Caco-2 (cell line): ENCODE measurements at regions of chr11 and their contacts with region 1.

Region 1: DNA sequence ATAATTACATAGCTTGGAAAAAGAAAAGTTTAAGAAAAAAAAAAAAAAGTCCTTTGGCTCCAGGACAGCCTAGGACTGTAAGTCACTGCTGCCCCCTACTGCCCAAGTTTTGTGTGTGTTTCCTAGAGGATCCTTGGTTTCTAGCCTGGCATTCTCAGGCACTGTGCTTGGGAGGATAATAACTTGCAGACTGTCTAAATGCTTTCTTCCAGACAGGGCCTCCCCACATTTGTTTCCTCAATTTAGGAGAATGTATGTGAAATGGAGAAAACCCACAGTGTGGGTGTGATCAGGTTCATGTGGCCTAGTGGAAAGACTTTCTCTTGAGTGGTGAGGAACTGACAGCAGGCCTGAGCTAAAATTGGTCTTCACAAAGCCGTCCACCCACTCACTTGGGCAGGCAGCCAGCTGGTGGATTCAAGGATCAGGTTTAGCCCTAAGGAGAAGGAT is 191.0 kb downstream of the NAV2 start:
- DNase-seq: peak; percentile 78 to 86
- H3K4me3 ChIP-seq: no peak overlapping the region
- H3K4me3 Mint-ChIP-seq: no peak overlapping the region
- H3K27ac Mint-ChIP-seq: no peak overlapping the region
- H3K4me1 ChIP-seq: peaks cover 13% of the 10 kb centered on the region; the same call in 1 of the 2 replicates
- H3K4me1 Mint-ChIP-seq: peaks cover 10% of the 10 kb centered on the region
- H3K27me3 ChIP-seq: no peaks in the 10 kb centered on the region
- H3K27me3 Mint-ChIP-seq: no peaks in the 10 kb centered on the region
- CTCF ChIP-seq: peak; percentile 86 to 91

Region 2: DNA sequence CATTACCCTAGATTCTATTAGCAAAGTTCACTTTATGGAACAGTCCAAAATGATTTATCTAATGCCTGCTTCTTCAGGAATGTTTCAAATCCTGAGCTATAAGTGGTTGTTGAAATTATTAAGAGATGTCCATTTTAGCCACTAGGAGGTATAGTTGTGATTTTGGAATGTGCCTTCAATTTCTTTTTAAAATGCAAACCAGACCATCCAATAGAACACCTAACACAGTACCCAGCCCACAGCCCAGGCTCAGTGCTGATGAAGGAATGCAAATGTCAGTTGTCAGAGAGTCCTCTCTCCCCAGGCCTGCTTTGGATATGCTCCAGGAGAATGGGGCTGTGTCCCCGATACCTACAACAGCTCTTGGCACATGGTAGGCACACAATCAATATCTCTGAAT is 577.1 kb before region 1 on chr11:
- CTCF ChIA-PET with region 1: interaction called, 4 read pairs
- POLR2A ChIA-PET with region 1: no interaction called
- intact Hi-C with region 1: loop called (anchors 5 kb)
- DNase-seq: no peak
- H3K4me3 ChIP-seq: no peak overlapping the region
- H3K4me3 Mint-ChIP-seq: no peak overlapping the region
- H3K27ac Mint-ChIP-seq: no peak overlapping the region
- H3K4me1 ChIP-seq: no peaks in the 10 kb centered on the region
- H3K4me1 Mint-ChIP-seq: no peaks in the 10 kb centered on the region
- H3K27me3 ChIP-seq: no peaks in the 10 kb centered on the region
- H3K27me3 Mint-ChIP-seq: peaks cover 5% of the 10 kb centered on the region
- CTCF ChIP-seq: peak in 1 of 2 experiments; percentile 24

Region 3: GRCh38 chr11:19561011-19561410 is 342.6 kb before region 1 on chr11:
- CTCF ChIA-PET with region 1: interaction called, 18 read pairs
- POLR2A ChIA-PET with region 1: interaction called, 3 read pairs
- intact Hi-C with region 1: loop called (anchors 1 kb)
- DNase-seq: no peak
- H3K4me3 ChIP-seq: no peak overlapping the region
- H3K4me3 Mint-ChIP-seq: no peak overlapping the region
- H3K27ac Mint-ChIP-seq: no peak overlapping the region
- H3K4me1 ChIP-seq: peaks cover 2% of the 10 kb centered on the region; the same call in 1 of the 2 replicates
- H3K4me1 Mint-ChIP-seq: peaks cover 2% of the 10 kb centered on the region
- H3K27me3 ChIP-seq: no peaks in the 10 kb centered on the region
- H3K27me3 Mint-ChIP-seq: no peaks in the 10 kb centered on the region
- CTCF ChIP-seq: no peak

Region 4: DNA sequence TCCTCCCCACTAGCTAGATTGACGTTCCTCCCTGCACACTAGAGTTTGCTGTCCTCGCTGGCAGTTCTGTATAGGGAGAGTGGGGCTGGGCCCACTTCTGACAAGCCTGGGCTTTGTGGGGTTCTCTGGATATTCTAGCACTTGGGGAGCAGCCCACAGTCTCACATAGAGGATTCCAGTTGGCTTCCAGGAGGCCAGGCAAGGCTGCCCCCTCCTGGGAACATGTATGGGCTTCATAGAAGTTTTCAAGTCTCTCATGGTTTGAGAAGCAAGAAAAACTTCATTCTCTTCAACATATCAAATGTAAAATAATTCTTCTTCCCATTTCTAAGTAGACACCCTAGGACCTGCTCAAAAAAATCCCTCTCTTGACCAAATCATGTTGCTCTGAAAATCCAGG is 103.5 kb before region 1 on chr11:
- CTCF ChIA-PET with region 1: interaction called, 3 read pairs
- POLR2A ChIA-PET with region 1: no interaction called
- intact Hi-C with region 1: loop called (anchors 5 kb)
- DNase-seq: no peak
- H3K4me3 ChIP-seq: no peak overlapping the region
- H3K4me3 Mint-ChIP-seq: no peak overlapping the region
- H3K27ac Mint-ChIP-seq: peak overlapping the region; percentile 23
- H3K4me1 ChIP-seq: peaks cover 49% of the 10 kb centered on the region
- H3K4me1 Mint-ChIP-seq: peaks cover 44% of the 10 kb centered on the region
- H3K27me3 ChIP-seq: no peaks in the 10 kb centered on the region
- H3K27me3 Mint-ChIP-seq: no peaks in the 10 kb centered on the region
- CTCF ChIP-seq: peak in 1 of 2 experiments; percentile 47

Region 5: DNA sequence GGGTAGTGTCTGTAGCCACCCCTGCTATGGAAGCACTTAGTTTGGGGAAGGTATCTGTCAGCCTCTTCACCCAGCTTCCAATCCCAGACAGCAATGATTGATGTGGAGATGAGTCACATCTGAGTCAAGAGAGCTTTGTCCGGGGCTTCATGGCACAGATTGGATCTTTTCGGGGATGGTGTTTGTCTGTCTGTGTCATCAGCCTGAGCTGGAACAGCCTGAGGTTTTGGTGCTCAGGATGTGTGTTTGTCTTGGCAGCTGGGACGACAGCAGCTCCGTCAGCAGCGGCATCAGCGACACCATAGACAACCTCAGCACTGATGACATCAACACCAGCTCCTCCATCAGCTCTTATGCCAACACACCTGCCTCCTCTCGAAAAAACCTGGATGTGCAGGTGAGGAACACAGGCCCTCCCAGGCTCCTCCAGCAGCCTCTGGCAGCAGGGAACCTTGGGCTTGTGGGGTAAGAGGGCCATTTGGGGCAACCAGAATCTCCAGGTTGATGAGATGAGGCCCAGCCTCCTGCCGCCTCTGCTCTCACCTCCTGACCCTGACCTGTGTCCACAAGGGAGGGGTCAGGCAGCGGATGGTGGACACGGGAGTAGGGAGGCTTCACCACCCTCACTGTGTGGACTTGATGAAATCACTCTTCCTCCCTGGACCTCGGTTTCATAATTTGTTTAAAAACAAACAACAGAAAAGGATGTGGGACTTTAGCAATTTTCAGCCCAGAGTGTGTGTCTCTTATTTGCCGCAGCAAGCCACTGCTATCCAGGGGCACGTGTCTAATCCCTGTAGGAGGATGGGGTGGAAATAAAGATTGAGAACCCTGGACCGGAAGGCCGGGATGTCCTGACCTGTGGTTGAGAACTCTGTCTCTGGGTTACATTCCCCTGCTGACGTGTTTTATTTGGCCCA is 132.3 kb after region 1 on chr11:
- CTCF ChIA-PET with region 1: no interaction called
- POLR2A ChIA-PET with region 1: no interaction called
- intact Hi-C with region 1: loop called (anchors 2 kb)
- DNase-seq: no peak
- H3K4me3 ChIP-seq: no peak overlapping the region
- H3K4me3 Mint-ChIP-seq: no peak overlapping the region
- H3K27ac Mint-ChIP-seq: peak overlapping the region; percentile 91
- H3K4me1 ChIP-seq: peaks cover 85% of the 10 kb centered on the region
- H3K4me1 Mint-ChIP-seq: peaks cover 70% of the 10 kb centered on the region
- H3K27me3 ChIP-seq: no peaks in the 10 kb centered on the region
- H3K27me3 Mint-ChIP-seq: no peaks in the 10 kb centered on the region
- CTCF ChIP-seq: no peak

Region 6: DNA sequence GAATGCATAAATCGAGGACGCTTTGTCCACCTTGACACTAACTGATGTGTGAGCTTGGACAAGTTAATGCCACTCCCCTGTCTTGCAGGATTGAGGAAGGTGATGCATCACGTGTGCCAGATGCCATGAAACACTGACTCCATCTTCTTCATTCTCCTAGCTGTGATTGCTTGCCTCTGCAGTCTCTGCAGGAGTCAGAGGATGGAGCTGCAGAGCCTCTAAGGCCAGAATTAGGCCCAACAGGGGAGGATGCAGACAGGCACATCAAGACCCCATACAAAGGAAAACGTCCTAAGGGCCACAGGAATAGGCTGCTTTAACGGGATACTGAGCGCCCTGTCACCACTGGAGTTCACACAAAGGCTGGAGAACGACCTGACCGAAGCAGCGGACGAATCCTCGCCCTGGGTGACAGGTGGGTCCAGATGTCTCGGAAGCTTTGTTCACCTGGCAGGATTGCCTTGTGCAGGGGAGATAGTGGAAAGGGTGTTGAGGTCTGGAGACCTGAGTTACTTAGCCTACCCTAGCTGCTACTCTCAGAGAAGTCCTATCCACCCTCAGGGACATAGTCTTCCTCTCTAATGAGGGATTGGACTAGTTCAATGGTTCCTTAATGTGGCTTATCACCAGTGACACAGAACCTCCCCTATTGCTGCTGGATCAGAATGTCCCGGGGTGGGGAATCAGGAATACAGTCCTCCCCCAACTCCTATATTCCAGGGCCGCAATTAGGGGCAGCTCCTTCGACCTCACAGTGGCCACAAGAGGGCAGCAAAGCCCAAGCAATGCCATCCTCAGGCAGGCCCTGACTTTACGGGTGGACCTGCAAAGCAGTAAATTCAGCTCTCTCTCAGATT is 224.3 kb after region 1 on chr11:
- CTCF ChIA-PET with region 1: interaction called, 7 read pairs
- POLR2A ChIA-PET with region 1: no interaction called
- intact Hi-C with region 1: loop called (anchors 1 kb)
- DNase-seq: peak; percentile 82 to 87
- H3K4me3 ChIP-seq: no peak overlapping the region
- H3K4me3 Mint-ChIP-seq: no peak overlapping the region
- H3K27ac Mint-ChIP-seq: no peak overlapping the region
- H3K4me1 ChIP-seq: no peaks in the 10 kb centered on the region
- H3K4me1 Mint-ChIP-seq: peaks cover 8% of the 10 kb centered on the region
- H3K27me3 ChIP-seq: no peaks in the 10 kb centered on the region
- H3K27me3 Mint-ChIP-seq: peaks cover 2% of the 10 kb centered on the region
- CTCF ChIP-seq: peak; percentile 82 to 89